ENCODE measurements at regions of chr6 and their contacts with region 1.

Region 1: DNA sequence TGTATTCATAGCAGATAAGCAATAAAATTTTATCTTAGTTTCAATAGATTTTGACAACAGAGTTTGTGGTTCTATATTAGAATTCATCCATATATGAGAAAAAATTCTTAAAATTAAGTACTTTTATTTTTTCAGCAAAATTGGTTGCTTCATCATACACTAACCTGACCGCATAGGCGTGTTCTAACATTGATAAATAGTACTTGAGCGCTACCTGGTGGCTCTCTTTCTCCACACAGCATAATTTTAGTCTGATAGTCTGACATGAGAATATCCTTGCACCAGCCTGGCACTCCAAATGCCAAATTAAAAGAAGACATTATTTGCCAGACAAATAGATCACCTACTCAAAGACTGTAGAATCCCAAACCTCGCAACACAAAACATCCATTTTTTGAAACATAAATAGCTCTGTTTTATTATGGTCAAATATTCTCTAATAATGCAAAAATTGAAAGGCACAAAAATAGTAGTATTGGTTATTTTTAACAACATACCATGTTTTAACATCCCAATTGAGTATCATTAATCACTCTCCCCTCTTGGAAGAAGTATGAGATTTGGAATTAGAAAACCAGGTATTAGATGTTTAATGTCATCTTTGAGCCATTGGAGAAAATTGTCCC is 33.0 kb upstream of the FILIP1 start:
- DNase-seq: peak in 1 of 2 donors; percentile 44
- ATAC-seq: peak; percentile 88
- H3K4me3 ChIP-seq: no peak overlapping the region
- H3K27ac ChIP-seq: no peak overlapping the region
- H3K4me1 ChIP-seq: no peaks in the 10 kb centered on the region
- H3K27me3 ChIP-seq: no peaks in the 10 kb centered on the region

Region 2: GRCh38 chr6:75266716-75267291 is 259.8 kb before region 1 on chr6:
- intact Hi-C with region 1: loop called (anchors 2 kb)
- DNase-seq: no peak
- ATAC-seq: peak; percentile 81
- H3K4me3 ChIP-seq: no peak overlapping the region
- H3K27ac ChIP-seq: no peak overlapping the region
- H3K4me1 ChIP-seq: peaks cover 0 to 7% of the 10 kb centered on the region in 2 donors
- H3K27me3 ChIP-seq: no peaks in the 10 kb centered on the region

Region 3: GRCh38 chr6:75368151-75368779 is 158.3 kb before region 1 on chr6:
- intact Hi-C with region 1: loop called in 1 of 2 experiments (anchors 10 kb)
- DNase-seq: no peak
- ATAC-seq: no peak
- H3K4me3 ChIP-seq: no peak overlapping the region
- H3K27ac ChIP-seq: peak overlapping the region in 1 of 2 donors; percentile 14
- H3K4me1 ChIP-seq: peaks cover 0 to 1% of the 10 kb centered on the region in 2 donors
- H3K27me3 ChIP-seq: no peaks in the 10 kb centered on the region

Region 4: DNA sequence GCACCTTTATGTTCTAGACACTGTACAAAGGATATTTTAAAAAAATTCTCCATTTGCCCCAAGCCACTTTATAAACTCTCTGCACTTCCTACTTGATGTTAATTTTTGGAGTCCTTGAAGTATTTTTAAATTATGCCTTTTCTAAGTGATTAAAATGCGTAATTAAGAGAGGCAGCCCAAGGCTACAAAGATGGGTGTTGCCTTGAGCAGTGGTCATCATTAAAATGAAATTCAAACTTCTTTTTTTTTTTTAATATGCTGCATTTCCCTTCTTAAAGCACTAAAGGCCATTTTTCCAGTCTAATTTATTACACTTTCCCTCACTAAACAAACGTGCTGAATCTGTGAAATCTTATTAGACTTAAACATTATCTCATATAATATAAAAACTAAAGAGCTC is 443.5 kb after region 1 on chr6:
- intact Hi-C with region 1: no loop called
- DNase-seq: no peak
- ATAC-seq: no peak
- H3K4me3 ChIP-seq: no peak overlapping the region
- H3K27ac ChIP-seq: no peak overlapping the region
- H3K4me1 ChIP-seq: no peaks in the 10 kb centered on the region
- H3K27me3 ChIP-seq: no peaks in the 10 kb centered on the region